ENCODE measurements at regions of chr10 and their contacts with region 1.

Region 1: DNA sequence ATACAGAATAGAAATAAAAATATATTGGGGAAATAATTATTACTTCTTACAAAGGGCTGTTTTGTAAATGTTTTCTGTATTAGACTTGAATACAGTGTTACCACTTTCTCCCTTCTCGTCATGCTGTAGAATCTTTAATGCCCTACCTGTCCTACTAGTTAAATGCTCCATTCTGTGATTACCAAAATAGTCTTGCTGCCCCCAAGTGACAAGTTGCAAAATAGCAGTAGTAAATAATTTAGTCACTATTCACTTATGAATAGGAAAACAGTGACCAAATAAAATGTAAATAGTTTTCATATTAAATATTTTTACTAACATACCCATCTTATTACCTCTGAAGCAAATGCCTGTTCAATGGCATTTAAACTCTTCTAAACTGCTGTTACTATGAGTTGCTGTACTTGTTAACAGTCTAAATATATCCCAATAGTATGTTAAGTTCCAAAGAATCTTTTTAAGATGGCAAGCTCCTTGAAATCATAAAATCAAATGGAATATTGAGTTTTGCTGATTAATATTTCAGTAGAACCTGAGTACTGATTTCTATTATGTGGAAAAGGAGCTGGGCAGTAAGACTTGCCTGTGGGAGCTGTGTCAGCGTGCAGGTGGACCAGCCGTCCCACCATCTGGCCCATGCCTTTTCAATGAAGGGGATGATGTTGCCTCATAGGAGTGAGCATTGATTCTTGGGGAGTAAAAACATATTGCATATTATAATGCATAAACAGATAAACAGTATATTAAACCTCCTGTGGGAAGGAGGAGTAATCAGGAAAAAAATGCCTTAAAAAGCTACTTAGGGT is 18.1 kb upstream of the OIT3 start:
- DNase-seq: peak; percentile 33
- CTCF ChIP-seq: peak; percentile 66

Region 2: DNA sequence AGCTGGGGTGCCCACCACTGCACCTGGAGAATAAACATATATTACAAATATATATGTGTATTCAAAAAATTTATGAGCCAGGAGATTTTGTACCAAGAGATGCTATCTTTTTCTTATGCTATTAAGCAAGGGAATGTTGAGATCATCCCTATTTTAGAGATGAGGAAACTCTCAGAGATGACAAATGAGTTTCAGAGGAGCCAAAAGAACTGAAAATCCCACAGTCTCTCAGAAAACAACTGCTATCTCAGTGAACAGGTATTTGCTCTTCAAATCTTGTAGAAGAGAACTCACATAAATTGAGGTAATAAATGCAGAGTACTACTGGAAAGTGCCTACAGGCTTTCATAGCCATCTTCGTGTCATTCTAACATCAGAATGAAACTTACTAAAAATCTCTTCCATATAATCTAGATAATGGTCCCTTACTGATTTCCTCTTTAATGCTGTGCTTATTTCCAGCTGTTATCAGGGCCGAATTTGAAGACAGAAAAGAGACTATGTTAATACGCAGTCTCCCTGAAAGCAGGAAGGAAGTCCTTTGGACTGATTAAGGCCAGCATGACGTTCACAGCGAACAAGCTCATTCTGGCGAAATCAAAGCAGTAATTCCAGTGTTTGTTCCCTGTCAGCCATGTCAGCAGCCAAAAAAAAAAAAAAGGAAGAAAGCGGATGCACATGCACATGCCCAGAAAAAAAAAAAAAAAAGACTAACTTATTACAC is 689.0 kb before region 1 on chr10:
- CTCF ChIA-PET with region 1: no interaction called
- POLR2A ChIA-PET with region 1: interaction called, 10 read pairs
- DNase-seq: no peak
- CTCF ChIP-seq: no peak

Region 3: DNA sequence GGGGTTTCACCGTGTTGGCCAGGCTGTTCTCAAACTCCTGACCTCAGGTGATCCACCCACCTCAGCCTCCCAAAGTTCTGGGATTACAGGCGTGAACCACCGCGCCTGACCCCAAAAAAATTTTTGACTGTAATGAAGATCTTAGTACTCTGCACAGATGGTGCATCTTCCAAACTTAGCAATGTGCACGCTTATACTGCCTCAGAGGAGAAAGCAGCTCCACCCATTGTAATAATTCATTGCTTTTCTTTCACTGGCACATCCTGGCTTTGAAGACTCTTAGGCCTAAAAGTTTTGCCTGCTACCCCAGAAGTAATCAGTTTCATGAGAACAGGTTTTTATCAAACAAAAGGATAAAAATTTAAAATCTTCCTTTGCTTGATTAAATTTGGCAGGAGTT is 34.0 kb before region 1 on chr10:
- CTCF ChIA-PET with region 1: no interaction called
- POLR2A ChIA-PET with region 1: no interaction called
- DNase-seq: no peak
- CTCF ChIP-seq: no peak

Region 4: GRCh38 chr10:72981882-72982529 is 106.6 kb after region 1 on chr10:
- CTCF ChIA-PET with region 1: no interaction called
- POLR2A ChIA-PET with region 1: no interaction called
- DNase-seq: no peak
- CTCF ChIP-seq: no peak